PC-9 (cell line): ENCODE measurements at regions of chr6 and their contacts with region 1.

Region 1: DNA sequence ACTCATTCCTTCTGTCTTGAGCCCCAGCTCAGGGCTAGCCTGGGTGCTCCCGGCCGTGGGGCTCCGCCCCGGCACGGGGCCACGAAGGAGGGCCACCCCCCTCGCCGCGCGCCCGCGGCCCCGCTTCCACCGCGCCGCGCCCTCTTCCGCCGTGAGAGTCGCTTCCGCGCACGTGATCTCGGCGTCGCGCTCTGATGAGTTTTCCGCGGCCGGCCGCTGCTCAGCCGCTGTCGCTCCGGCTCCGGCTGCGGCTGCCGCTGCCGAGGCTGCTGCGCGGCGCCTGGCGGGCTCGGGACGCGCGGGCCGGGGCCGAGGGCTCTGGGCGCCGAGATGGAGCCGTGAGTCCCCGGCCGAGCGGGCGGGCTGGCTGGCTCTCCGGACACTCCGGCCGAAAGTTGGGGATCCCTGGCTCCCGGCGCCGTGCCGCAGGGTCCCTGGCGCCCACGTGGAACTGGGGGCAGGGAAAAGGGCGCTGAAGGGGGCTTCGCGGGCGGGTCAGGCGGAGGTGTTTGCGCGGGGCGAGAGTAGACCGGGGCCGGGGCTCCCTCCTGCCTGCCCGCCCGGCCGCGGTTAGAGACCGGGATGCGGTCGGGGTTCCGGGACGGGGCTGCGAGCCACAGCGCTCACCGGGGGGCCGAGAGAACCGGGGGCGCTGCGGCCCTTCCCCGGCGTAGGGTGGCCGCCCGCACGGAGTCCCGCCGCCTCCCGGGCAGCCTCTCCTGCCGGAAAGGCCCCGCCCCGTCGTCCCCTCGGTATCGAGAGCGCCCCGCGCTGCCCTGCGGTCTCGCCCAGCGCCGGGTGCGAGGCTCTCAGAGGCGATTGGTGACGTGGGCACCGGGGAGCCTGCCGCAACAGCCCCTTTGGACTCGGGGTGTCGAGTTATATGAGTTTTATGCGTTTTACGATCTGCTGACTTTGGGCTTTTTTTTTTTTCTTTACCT is at the start of gene TMEM181:
- DNase-seq: peak; percentile 49 to 66
- H3K4me3 ChIP-seq: peak within 1 kb of the TSS; percentile 86
- H3K27ac ChIP-seq: peak within 1 kb of the TSS; percentile 71
- H3K4me1 ChIP-seq: peaks cover 35% of the 10 kb centered on the region
- H3K27me3 ChIP-seq: no peaks in the 10 kb centered on the region
- CTCF ChIP-seq: no peak
- total RNA-seq, gene TMEM181: 14.9 and 18.7 TPM in 2 replicates

Region 2: GRCh38 chr6:158231551-158232315 is 328.4 kb before region 1 on chr6:
- CTCF ChIA-PET with region 1: no interaction called
- POLR2A ChIA-PET with region 1: no interaction called
- intact Hi-C with region 1: loop called (anchors 5 kb)
- DNase-seq: peak; percentile 51 to 56
- H3K4me3 ChIP-seq: peak overlapping the region; percentile 61
- H3K27ac ChIP-seq: peak overlapping the region; percentile 60
- H3K4me1 ChIP-seq: peaks cover 20% of the 10 kb centered on the region
- H3K27me3 ChIP-seq: no peaks in the 10 kb centered on the region
- CTCF ChIP-seq: no peak